Dorsolateral prefrontal cortex (tissue), 120 donors: ENCODE measurements at regions of chr11 and their contacts with region 1.

Region 1: DNA sequence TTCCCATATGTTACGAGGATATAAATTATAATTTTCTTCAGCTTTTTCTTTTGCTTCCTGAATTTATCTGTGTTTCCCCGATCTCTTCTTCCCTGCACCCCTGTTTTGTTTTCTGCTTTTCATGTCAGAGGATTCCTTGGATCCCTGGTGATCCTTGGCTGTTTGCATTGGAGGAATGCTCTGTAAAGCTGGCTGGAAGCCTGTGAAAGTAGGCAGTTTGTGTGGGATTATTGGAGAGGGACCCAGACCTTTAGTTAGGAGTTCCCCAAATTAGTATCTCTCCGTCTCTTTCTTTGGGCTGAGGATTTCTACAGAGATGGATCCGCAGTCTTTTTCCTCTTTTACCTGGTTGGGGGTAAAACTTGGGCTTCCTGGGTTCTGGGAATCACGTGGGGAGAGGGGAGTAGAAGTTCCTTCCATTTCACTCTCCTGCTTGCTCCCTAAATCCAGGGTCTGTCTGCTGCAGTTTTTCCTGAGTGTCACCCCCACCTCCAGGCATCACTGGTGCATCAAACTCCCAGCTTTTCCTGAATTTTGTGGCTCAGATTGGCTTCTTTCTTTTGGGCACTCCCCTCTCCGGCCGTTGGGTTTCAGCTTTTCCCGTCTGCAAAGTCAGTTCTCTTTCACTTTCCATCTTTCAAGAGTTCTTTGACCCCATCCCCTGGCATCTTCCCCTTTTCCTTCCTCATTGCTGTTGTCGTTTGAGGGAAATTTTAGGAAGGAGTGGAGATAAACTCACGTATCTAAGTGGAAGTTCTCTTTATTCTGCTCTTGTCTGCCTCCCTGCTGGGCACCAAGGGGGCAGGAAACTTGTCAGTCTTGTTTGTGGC is 79.1 kb upstream of the ALX4 start:
- DNase-seq: no peak
- H3K4me3 ChIP-seq: peak overlapping the region in 3 of 59 donors; percentile 3 to 17 (median 9)
- H3K27ac ChIP-seq: no peak overlapping the region
- H3K27me3 ChIP-seq: peaks cover 0 to 24% (median 3%) of the 10 kb centered on the region in 45 donors
- CTCF ChIP-seq: no peak

Region 2: GRCh38 chr11:44326615-44327475 is 62.2 kb before region 1 on chr11:
- intact Hi-C with region 1: loop called in 1 of 2 experiments (anchors 10 kb)
- DNase-seq: no peak
- H3K4me3 ChIP-seq: no peak overlapping the region
- H3K27ac ChIP-seq: no peak overlapping the region
- H3K27me3 ChIP-seq: peaks cover 0 to 89% (median 56%) of the 10 kb centered on the region in 45 donors
- CTCF ChIP-seq: no peak